Activated CD8-positive, alpha-beta memory T cell treated with anti-CD3 and anti-CD28 coated beads, Interleukin-2, amount 10 ng/mL, durations not matched to agents 7 days and 5 days (primary cell): ENCODE measurements at regions of chr16 and their contacts with region 1.

Region 1: DNA sequence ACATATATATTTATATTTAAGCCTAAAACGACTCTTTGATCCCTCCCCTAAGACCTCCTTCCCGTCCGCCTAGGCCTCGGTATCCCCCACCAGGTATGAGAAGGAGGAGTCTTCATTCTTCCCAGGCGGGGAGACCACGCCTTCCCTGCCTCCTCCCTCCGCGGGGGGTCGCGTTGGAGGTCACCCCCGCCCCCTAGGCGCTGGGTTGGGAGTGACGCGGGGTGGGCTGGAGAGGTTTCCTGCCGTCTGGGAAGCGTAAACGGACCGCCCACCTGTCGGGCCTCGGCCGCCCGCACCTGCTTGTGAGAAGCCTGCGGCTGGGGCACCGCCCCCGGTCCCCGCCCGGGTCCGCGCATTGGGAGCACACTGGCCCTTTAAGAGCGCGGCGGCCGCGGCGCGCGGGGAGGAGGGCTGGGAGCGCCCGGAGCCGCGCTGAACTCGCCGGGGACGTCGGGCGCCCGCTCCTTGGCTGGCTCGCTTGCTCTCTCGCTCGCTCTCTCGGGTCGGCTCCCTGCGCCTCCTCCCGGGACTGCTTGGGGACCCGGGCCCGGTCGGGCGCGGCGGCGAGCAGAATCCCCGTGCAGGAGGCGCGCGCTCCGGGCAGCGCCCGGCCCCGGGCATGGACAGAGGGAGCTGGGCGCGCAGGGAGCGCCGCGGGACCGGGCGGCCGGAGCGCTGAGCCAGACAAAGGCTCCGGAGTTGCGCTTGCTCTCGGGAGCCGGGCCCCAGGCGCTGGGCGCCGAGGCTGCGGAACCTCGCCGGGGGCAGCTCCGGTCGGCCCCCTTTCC is at the start of gene MMP15:
- DNase-seq: peak; percentile 73
- ATAC-seq: peak; percentile 77
- H3K4me3 Mint-ChIP-seq: peak within 1 kb of the TSS; percentile 77
- H3K27ac Mint-ChIP-seq: peak within 1 kb of the TSS; percentile 67
- H3K4me1 Mint-ChIP-seq: peaks cover 13% of the 10 kb centered on the region
- H3K27me3 Mint-ChIP-seq: peaks cover 19% of the 10 kb centered on the region
- total RNA-seq, gene MMP15: 0.75 to 1.1 TPM

Region 2: DNA sequence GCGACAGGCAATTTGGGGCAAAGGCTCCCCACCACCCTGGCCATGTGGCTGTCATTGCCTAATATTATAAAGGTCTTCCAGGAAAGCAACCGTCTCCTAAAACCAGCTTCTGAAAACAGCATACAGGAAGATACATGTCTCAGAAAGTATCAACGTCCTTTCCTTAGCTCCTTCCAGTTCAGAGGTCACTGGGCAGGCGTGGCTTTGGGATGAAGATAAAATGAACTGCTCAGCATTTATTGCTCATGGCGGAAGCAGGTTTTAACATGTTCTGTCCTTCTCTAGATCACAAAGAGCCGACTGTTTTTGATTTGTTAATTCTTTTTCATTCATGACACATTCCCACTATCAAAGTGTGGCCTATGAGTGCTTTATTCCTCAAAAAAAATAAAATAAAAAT is 95.6 kb after region 1 on chr16:
- CTCF ChIA-PET with region 1: interaction called, 20 read pairs
- DNase-seq: no peak
- ATAC-seq: no peak
- H3K4me3 Mint-ChIP-seq: no peak overlapping the region
- H3K27ac Mint-ChIP-seq: no peak overlapping the region
- H3K4me1 Mint-ChIP-seq: peaks cover 38% of the 10 kb centered on the region
- H3K27me3 Mint-ChIP-seq: no peaks in the 10 kb centered on the region

Region 3: GRCh38 chr16:58127033-58127556 is 101.5 kb after region 1 on chr16:
- CTCF ChIA-PET with region 1: interaction called, 20 read pairs
- DNase-seq: peak; percentile 64
- ATAC-seq: peak; percentile 17
- H3K4me3 Mint-ChIP-seq: peak overlapping the region; percentile 85
- H3K27ac Mint-ChIP-seq: peak overlapping the region; percentile 81
- H3K4me1 Mint-ChIP-seq: peaks cover 53% of the 10 kb centered on the region
- H3K27me3 Mint-ChIP-seq: no peaks in the 10 kb centered on the region

Region 4: DNA sequence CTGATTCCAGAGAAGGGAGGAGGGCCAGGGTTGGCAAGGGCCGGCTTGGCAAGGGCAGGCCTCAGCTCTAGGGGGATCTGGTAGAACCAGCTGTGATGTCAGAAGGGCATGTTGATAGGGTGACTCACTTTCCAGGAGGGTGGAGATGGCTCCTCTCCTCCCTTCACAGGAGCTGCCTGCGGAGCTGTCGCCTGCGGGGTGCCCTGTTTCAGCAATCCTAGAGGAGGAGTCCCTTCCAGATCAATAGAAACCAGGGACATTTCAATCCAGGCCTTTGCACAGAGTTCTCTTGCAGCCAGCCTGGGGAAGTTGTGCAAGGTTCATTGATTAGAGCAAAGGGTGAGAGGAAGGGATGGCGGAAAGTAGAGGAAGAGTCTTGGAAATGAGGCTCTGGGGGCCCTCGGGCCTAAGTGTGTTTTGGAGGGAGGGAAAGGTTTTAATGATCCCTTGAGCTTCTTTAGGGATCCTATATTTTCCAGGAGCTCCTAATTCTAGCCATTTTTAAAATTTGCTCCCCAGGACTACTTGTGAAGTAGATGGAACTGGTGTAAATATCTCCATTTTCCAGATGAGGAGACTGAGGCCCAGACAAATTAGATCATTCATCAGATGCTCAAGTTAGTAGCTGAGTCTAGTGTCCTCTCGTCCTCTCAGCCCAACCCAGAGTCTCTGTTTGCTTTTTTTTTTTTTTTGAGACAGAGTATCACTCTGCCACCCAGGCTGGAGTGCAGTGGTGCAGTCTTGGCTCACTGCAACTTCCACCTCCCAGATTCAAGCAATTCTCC is 197.2 kb after region 1 on chr16:
- CTCF ChIA-PET with region 1: no interaction called
- DNase-seq: no peak
- ATAC-seq: no peak
- H3K4me3 Mint-ChIP-seq: no peak overlapping the region
- H3K27ac Mint-ChIP-seq: no peak overlapping the region
- H3K4me1 Mint-ChIP-seq: no peaks in the 10 kb centered on the region
- H3K27me3 Mint-ChIP-seq: peaks cover 30% of the 10 kb centered on the region